ENCODE measurements at regions of chr5 and their contacts with region 1.

Region 1: DNA sequence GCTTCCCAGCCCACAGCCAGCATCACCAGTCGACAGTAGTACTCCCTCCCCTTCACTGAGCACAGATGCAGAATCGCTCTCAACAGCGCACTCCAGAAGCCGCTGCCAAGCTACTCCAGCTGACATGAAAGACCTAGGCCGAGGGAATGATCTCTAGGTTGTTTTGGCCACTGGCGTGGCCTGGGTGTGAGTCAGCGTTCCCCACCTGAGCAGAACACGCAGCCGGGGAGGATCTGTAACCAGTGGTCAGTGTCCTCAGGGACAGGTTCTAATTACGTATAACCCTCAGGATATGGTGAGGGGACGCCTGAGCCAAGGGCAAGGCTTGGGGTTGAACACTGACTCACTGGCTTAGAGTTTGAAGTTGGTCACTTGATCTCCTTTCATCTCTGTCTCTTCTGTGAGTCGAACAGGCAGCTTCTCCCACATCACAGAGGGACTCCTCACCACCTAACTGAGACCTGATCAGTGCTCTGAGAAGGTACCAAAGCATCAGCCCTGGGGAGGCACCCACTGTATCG is 76.9 kb upstream of the IL17B start:
- DNase-seq: no peak
- H3K4me3 ChIP-seq: no peak overlapping the region
- CTCF ChIP-seq: no peak

Region 2: DNA sequence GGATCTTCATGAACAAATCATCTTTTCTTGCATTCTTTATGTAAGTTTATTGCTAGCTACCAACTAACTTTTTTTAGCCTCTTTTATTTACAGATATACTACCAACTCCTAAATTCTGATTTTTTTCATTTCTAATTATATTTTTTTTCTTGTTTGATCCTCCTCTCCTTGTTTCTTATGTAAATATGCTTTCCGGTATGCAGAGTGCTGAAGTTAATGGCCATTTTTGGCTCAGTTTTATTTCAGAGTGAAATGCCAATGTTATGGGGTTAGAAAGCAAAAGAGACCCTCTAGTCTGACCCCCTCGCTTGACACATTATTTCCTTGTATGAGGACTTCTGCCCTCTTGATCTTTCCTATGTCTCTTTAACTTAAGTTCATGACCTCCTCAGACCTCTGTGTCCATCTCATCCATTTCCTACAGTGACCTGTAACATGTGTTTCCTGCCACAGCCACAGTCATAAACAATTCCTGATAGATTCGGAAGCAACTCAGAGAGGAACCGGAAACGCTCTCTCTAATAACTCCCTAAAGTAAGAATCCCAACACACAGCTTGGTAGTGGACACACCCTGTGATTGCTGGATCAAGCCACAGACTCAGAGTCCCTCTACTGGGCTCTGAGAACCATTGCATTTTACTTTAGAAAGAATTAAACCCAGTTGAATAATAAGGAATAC is 227.2 kb before region 1 on chr5:
- CTCF ChIA-PET with region 1: no interaction called
- POLR2A ChIA-PET with region 1: no interaction called
- DNase-seq: peak; percentile 55
- H3K4me3 ChIP-seq: no peak overlapping the region
- CTCF ChIP-seq: peak; percentile 67

Region 3: GRCh38 chr5:149466457-149466972 is 10.6 kb after region 1 on chr5:
- CTCF ChIA-PET with region 1: interaction called, 12 read pairs
- POLR2A ChIA-PET with region 1: interaction called, 7 read pairs
- DNase-seq: no peak
- H3K4me3 ChIP-seq: no peak overlapping the region; the same call in 1 of the 2 replicates
- CTCF ChIP-seq: no peak